CD8-positive, alpha-beta T cell (primary cell): ENCODE measurements at regions of chr15 and their contacts with region 1.

Region 1: GRCh38 chr15:34342737-34343575 is at the starts of genes NOP10 and NUTM1:
- DNase-seq: peak; percentile 87 to 96 (median 93)
- ATAC-seq: peak; percentile 83
- H3K4me3 ChIP-seq: peak within 1 kb of the TSS; percentile 88 to 90
- H3K4me3 Mint-ChIP-seq: no peak within 1 kb of the TSS
- H3K27ac ChIP-seq: peak within 1 kb of the TSS; percentile 82 to 90
- H3K27ac Mint-ChIP-seq: peak within 1 kb of the TSS; percentile 85
- H3K4me1 ChIP-seq: peaks cover 20% of the 10 kb centered on the region
- H3K4me1 Mint-ChIP-seq: peaks cover 24% of the 10 kb centered on the region
- H3K27me3 ChIP-seq: no peaks in the 10 kb centered on the region
- H3K27me3 Mint-ChIP-seq: no peaks in the 10 kb centered on the region
- CTCF ChIP-seq: peak; percentile 90
- total RNA-seq, gene NOP10: 36.6 to 40.1 TPM
- total RNA-seq, gene NUTM1: not detected

Region 2: DNA sequence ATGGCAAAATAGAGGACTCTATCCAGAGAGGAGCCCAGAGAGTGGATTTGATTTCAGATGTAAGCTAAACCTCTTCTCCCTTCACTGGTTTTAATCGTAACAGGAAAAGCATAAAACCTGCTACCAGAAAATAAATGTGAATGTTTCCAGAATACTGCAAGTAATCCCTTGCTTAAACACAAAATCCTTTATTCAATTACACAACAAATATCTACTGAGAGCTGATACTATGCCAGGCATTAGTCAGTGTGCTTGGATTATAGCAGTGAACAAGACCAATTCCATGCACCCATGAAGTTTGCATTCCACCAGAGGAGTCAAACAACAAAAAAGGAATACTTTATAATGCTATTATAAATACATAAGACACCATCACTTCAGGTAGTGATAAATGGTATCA is 319.0 kb before region 1 on chr15:
- CTCF ChIA-PET with region 1: no interaction called
- POLR2A ChIA-PET with region 1: no interaction called
- intact Hi-C with region 1: no loop called
- DNase-seq: no peak
- ATAC-seq: no peak
- H3K4me3 ChIP-seq: no peak overlapping the region
- H3K4me3 Mint-ChIP-seq: no peak overlapping the region
- H3K27ac ChIP-seq: no peak overlapping the region
- H3K27ac Mint-ChIP-seq: no peak overlapping the region
- H3K4me1 ChIP-seq: peaks cover 8% of the 10 kb centered on the region
- H3K4me1 Mint-ChIP-seq: peaks cover 2% of the 10 kb centered on the region
- H3K27me3 ChIP-seq: no peaks in the 10 kb centered on the region
- H3K27me3 Mint-ChIP-seq: no peaks in the 10 kb centered on the region
- CTCF ChIP-seq: no peak

Region 3: GRCh38 chr15:34331809-34332208 is 11.1 kb before region 1 on chr15:
- CTCF ChIA-PET with region 1: interaction called, 15 read pairs
- POLR2A ChIA-PET with region 1: interaction called, 30 read pairs
- intact Hi-C with region 1: no loop called
- DNase-seq: peak in 2 of 9 experiments; percentile 61 to 74
- ATAC-seq: peak; percentile 64
- H3K4me3 ChIP-seq: no peak overlapping the region
- H3K4me3 Mint-ChIP-seq: peak overlapping the region; percentile 23
- H3K27ac ChIP-seq: peak overlapping the region in 1 of 2 experiments; percentile 62
- H3K27ac Mint-ChIP-seq: peak overlapping the region; percentile 80
- H3K4me1 ChIP-seq: peaks cover 86% of the 10 kb centered on the region
- H3K4me1 Mint-ChIP-seq: peaks cover 83% of the 10 kb centered on the region
- H3K27me3 ChIP-seq: no peaks in the 10 kb centered on the region
- H3K27me3 Mint-ChIP-seq: no peaks in the 10 kb centered on the region
- CTCF ChIP-seq: no peak

Region 4: GRCh38 chr15:34437687-34438086 is 94.7 kb after region 1 on chr15 and contains the start of gene GOLGA8A:
- CTCF ChIA-PET with region 1: no interaction called
- POLR2A ChIA-PET with region 1: no interaction called
- intact Hi-C with region 1: loop called (anchors 2 to 10 kb)
- DNase-seq: peak; percentile 49 to 88 (median 82)
- ATAC-seq: peak; percentile 82
- H3K4me3 ChIP-seq: peak within 1 kb of the TSS; percentile 47 to 73
- H3K4me3 Mint-ChIP-seq: peak within 1 kb of the TSS; percentile 96
- H3K27ac ChIP-seq: peak within 1 kb of the TSS in 1 of 2 experiments; percentile 27
- H3K27ac Mint-ChIP-seq: peak within 1 kb of the TSS; percentile 90
- H3K4me1 ChIP-seq: peaks cover 11% of the 10 kb centered on the region
- H3K4me1 Mint-ChIP-seq: peaks cover 24% of the 10 kb centered on the region
- H3K27me3 ChIP-seq: no peaks in the 10 kb centered on the region
- H3K27me3 Mint-ChIP-seq: peaks cover 2% of the 10 kb centered on the region
- CTCF ChIP-seq: no peak
- total RNA-seq, gene GOLGA8A: 199 to 214 TPM